HCT116 (cell line): ENCODE measurements at regions of chr5 and their contacts with region 1.

Region 1: GRCh38 chr5:134586866-134587524 is 45.6 kb downstream of the SAR1B start:
- DNase-seq: peak; percentile 85
- ATAC-seq: peak; percentile 86
- H3K4me3 ChIP-seq: peak overlapping the region in 1 of 2 experiments; percentile 28; a peak in 2 of 4 replicates
- H3K27ac ChIP-seq: peak overlapping the region; percentile 45
- H3K4me1 ChIP-seq: peaks cover 13 to 27% of the 10 kb centered on the region in 2 experiments
- H3K27me3 ChIP-seq: no peaks in the 10 kb centered on the region
- CTCF ChIP-seq: peak; percentile 86 to 93 (median 90)
- POLR2A ChIP-seq: no peak
- RAD21 ChIP-seq: peak; percentile 95

Region 2: DNA sequence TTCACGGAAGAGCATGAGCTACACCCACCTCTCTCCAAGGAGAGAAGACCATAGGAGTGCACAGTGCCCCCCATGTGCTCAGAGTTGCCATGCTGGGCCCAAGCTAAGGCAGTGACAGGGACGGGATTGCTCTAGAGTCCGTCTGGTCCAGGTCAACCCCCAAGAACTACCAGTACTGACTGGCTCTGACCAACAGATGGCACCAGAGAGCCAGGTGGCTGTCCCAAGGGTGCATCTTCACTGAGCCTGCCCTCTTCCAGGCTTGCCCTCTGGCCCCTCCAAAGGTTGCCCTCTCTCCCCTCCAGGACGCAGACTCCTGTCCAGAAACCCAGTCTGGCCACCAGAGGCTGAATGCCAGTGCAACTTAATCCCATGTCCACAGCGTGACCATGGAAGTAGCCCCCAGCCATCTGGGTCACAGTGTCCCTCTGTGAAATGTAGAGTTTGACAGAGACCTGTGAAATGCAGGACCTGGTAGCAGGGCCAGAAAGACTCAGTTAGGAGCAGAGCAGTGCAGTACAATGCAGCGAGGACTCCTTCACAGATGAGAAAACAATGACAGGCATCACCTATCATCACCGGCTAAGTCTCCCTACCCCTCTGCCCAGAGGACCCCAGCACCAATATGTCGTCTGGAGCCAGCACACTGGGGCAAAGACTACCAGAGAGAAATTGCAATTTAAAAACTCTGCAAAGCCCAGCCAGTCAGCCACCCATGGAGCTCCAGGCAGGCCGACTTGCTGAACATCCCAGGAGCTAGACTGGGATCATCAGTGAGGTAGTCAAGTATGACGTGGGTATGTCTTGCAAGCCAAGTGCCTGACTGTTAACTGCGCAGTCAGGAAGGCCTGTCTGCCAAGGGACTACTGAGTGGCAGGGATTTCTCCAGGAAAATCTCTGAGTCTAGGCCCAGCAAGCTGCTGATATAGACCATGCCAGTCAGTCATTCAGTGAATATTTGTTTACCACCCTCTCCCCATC is 402.6 kb before region 1 on chr5:
- CTCF ChIA-PET with region 1: interaction called, 3 read pairs
- POLR2A ChIA-PET with region 1: no interaction called
- RAD21 ChIA-PET with region 1: no interaction called
- intact Hi-C with region 1: loop called (anchors 10 kb)
- DNase-seq: peak; percentile 48
- ATAC-seq: peak; percentile 98
- H3K4me3 ChIP-seq: no peak overlapping the region
- H3K27ac ChIP-seq: no peak overlapping the region
- H3K4me1 ChIP-seq: no peaks in the 10 kb centered on the region
- H3K27me3 ChIP-seq: no peaks in the 10 kb centered on the region
- CTCF ChIP-seq: peak in 2 of 3 experiments; percentile 88 to 93; a peak in 4 of 6 replicates
- POLR2A ChIP-seq: no peak
- RAD21 ChIP-seq: no peak

Region 3: DNA sequence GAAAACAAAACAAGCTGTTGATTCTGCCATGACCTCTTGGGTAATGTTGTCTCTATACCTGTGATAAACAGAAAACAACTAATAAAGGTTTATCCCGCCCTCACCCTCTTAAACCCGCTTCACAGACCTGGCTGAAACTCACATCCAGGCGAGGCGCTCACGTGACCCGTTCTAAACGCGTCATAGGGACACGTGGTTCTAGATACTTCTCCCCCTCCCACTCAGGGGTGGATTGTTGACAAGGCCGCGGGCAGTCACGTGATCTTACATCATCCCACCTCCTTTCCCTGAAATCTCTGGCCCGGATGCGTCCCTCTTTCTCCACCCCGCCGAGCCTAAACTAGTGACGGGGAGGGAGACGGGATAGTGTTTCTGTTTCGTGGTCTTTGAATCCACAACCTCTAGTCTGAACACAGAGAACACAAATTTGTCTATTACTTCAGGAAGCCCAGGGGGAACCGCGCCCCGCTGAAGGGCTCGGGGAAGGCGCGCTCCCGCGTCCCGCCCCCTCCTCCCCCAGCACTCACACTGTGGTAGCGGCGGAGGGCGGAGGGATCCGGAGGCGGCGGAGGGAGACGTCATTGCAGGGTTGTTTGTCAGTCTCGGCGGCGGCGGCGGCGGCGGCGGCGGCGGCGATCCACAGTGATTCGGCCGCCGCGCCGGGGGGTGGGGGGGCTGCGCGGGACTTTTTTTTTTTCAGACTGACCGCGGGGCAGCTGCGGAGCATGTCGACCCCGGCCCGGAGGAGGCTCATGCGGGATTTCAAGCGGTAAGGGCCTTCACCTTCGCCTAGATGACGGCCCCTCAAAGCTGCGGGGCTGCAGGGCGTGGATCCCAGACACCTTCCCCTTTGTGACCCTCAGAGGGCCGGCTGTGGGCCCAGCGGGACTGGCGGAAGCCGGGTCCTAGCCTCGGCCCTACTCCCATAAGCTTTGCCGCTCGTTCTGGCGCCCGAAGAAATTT is 215.8 kb before region 1 on chr5 and contains the start of gene UBE2B:
- CTCF ChIA-PET with region 1: interaction called, 5 read pairs
- POLR2A ChIA-PET with region 1: no interaction called
- RAD21 ChIA-PET with region 1: no interaction called
- intact Hi-C with region 1: loop called (anchors 5 kb)
- DNase-seq: peak; percentile 99
- ATAC-seq: peak; percentile 69
- H3K4me3 ChIP-seq: peak within 1 kb of the TSS; percentile 72 to 97
- H3K27ac ChIP-seq: peak within 1 kb of the TSS; percentile 73
- H3K4me1 ChIP-seq: peaks cover 14 to 26% of the 10 kb centered on the region in 2 experiments
- H3K27me3 ChIP-seq: no peaks in the 10 kb centered on the region
- CTCF ChIP-seq: no peak
- POLR2A ChIP-seq: peak; percentile 63
- RAD21 ChIP-seq: no peak
- total RNA-seq, gene UBE2B: 91.9 TPM

Region 4: DNA sequence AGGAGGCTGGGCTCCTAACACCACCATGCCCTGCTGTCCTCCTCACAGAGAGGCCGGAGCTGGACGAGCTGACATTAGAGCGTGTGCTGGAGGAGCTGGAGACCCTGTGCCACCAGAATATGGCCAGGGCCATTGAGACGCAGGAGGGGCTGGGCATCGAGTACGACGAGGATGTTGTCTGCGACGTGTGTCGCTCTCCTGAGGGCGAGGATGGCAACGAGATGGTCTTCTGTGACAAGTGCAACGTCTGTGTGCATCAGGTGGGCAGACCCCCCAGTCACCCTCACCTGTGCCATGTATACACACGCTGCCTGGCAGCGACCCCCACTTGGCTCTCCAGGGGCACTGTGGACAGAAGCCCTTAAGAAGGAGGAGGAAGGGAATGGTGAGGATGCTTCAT is 26.3 kb before region 1 on chr5:
- CTCF ChIA-PET with region 1: interaction called, 11 read pairs
- POLR2A ChIA-PET with region 1: no interaction called
- RAD21 ChIA-PET with region 1: no interaction called
- intact Hi-C with region 1: no loop called
- DNase-seq: no peak
- ATAC-seq: no peak
- H3K4me3 ChIP-seq: no peak overlapping the region
- H3K27ac ChIP-seq: no peak overlapping the region
- H3K4me1 ChIP-seq: peaks cover 12 to 20% of the 10 kb centered on the region in 2 experiments
- H3K27me3 ChIP-seq: no peaks in the 10 kb centered on the region
- CTCF ChIP-seq: no peak
- POLR2A ChIP-seq: no peak
- RAD21 ChIP-seq: no peak

Region 5: DNA sequence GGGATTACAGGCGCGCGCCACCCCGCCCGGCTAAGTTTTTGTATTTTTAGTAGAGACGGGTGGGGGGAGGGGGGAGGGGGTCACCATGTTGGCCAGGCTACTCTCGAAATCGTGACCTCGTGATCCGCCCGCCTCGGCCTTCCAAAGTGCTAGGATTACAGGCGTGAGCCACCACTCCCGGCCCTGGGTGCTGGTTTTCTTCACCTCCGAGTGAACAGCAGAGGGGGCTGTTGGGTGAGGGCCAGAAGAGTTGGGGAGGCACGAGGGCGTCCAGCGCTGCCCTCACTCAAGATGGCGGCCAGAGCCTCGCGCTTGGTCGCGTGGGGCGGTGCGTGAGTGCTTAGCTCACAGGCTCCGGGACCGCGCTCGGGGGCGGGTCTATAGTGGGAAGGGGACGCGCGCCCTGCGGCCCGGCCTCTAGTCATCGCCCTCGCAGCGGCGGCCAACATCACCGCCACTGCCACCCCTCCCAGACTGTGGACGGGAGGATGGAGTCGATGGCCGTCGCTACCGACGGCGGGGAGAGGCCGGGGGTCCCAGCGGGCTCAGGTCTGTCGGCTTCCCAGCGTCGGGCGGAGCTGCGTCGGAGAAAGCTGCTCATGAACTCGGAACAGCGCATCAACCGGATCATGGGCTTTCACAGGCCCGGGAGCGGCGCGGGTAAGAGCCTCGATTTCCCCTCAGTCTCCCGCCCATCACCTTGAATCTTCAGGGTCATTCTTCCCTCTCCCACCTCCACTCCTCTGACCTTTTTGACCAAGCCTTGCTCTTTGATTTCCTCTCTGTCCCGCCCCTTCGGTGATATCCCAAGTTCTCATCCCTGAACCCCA is 151.4 kb after region 1 on chr5 and contains the start of gene CAMLG:
- CTCF ChIA-PET with region 1: interaction called, 15 read pairs
- POLR2A ChIA-PET with region 1: no interaction called
- RAD21 ChIA-PET with region 1: interaction called, 5 read pairs
- intact Hi-C with region 1: loop called (anchors 2 kb)
- DNase-seq: peak; percentile 96
- ATAC-seq: peak; percentile 91
- H3K4me3 ChIP-seq: peak within 1 kb of the TSS; percentile 66 to 77
- H3K27ac ChIP-seq: peak within 1 kb of the TSS; percentile 70
- H3K4me1 ChIP-seq: peaks cover 9 to 24% of the 10 kb centered on the region in 2 experiments
- H3K27me3 ChIP-seq: no peaks in the 10 kb centered on the region
- CTCF ChIP-seq: peak; percentile 49 to 79 (median 66)
- POLR2A ChIP-seq: peak; percentile 65
- RAD21 ChIP-seq: peak; percentile 65
- total RNA-seq, gene CAMLG: 29.3 TPM

Region 6: DNA sequence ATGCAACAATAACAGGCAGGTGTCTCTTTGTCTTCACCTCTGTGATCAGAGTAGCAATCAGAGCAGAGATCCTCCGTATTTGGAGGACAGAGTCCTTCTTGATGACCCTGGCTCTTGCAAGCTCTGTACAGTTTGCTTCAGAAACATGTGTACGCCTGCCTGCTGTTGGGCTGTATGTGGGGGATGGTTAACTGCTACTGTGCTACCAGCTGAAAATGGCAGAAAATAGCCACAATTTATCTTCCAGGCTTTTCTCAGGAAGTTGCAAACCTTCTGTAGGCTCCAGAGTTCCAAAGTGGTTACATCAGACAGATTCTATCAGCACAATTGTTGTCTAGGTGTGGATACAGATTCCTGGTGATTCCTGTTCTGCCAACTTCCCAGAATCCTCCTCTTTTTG is 207.1 kb after region 1 on chr5:
- CTCF ChIA-PET with region 1: no interaction called
- POLR2A ChIA-PET with region 1: no interaction called
- RAD21 ChIA-PET with region 1: no interaction called
- intact Hi-C with region 1: no loop called
- DNase-seq: no peak
- ATAC-seq: no peak
- H3K4me3 ChIP-seq: no peak overlapping the region
- H3K27ac ChIP-seq: no peak overlapping the region
- H3K4me1 ChIP-seq: no peaks in the 10 kb centered on the region
- H3K27me3 ChIP-seq: no peaks in the 10 kb centered on the region
- CTCF ChIP-seq: no peak
- POLR2A ChIP-seq: no peak
- RAD21 ChIP-seq: no peak